Activated CD4-positive, alpha-beta T cell treated with anti-CD3 and anti-CD28 coated beads for 36 hours (primary cell): ENCODE measurements at regions of chr3 and their contacts with region 1.

Region 1: GRCh38 chr3:158539414-158540014 is 31.5 kb upstream of the MLF1 start:
- DNase-seq: peak; percentile 65
- ATAC-seq: peak; percentile 57
- H3K4me3 Mint-ChIP-seq: no peak overlapping the region
- H3K27ac Mint-ChIP-seq: no peak overlapping the region
- H3K4me1 Mint-ChIP-seq: no peaks in the 10 kb centered on the region
- H3K27me3 Mint-ChIP-seq: no peaks in the 10 kb centered on the region

Region 2: DNA sequence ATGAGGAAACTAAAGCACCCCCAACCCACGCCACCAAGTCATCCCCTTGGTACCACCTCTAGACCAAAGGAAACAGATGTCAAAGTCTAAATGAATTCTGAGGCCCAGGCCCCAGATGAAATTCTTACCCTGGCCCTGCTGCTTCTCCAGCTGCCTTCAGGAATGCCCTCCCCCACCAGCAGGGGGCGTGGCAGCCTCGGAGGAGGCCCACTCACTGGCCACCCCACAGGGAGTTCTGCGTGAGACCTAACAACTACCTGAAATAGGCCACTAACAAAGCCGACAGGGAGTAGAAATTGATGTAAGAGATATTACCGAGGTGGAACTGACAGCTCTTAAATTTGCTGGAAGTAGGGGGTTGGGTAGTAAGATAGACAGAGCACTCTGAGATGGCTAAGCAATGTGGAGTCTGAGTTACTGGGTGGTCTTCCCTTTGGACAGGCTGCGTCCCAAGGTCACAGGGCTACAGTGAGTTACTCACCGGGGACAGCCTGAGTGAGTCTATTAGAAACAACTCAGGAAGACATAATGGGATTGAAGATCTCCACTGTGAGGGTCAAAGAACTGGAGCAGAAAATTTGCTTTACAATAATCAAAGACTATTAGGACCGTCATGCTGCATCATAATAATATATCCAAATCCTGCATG is 674.0 kb before region 1 on chr3:
- CTCF ChIA-PET with region 1: no interaction called
- POLR2A ChIA-PET with region 1: no interaction called
- intact Hi-C with region 1: loop called in 1 of 2 experiments (anchors 10 kb)
- DNase-seq: peak; percentile 73
- ATAC-seq: peak; percentile 65
- H3K4me3 Mint-ChIP-seq: no peak overlapping the region
- H3K27ac Mint-ChIP-seq: no peak overlapping the region
- H3K4me1 Mint-ChIP-seq: no peaks in the 10 kb centered on the region
- H3K27me3 Mint-ChIP-seq: no peaks in the 10 kb centered on the region

Region 3: DNA sequence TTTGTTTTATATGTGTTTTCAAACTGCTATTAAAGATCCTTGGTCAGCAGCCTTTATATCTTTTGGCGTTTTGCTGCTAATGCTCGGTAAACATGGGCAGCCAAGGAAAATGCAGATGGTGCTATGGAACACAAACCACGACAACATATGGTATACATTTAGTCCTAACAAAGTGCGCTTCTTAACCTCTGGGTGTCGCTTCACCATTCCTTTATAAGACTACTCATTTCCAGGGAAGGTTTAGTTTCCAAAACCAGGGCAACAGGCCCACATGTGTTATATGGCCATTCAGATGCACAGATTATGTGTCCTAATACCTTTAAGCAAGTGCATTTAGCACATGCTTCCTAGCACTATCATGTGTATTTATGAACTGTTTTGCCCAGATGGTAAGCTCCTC is 448.0 kb before region 1 on chr3:
- CTCF ChIA-PET with region 1: no interaction called
- POLR2A ChIA-PET with region 1: no interaction called
- intact Hi-C with region 1: loop called in 1 of 2 experiments (anchors 5 kb)
- DNase-seq: no peak
- ATAC-seq: no peak
- H3K4me3 Mint-ChIP-seq: no peak overlapping the region
- H3K27ac Mint-ChIP-seq: no peak overlapping the region
- H3K4me1 Mint-ChIP-seq: peaks cover 4% of the 10 kb centered on the region
- H3K27me3 Mint-ChIP-seq: peaks cover 64% of the 10 kb centered on the region